ENCODE measurements at regions of chr21 and their contacts with region 1.

Region 1: DNA sequence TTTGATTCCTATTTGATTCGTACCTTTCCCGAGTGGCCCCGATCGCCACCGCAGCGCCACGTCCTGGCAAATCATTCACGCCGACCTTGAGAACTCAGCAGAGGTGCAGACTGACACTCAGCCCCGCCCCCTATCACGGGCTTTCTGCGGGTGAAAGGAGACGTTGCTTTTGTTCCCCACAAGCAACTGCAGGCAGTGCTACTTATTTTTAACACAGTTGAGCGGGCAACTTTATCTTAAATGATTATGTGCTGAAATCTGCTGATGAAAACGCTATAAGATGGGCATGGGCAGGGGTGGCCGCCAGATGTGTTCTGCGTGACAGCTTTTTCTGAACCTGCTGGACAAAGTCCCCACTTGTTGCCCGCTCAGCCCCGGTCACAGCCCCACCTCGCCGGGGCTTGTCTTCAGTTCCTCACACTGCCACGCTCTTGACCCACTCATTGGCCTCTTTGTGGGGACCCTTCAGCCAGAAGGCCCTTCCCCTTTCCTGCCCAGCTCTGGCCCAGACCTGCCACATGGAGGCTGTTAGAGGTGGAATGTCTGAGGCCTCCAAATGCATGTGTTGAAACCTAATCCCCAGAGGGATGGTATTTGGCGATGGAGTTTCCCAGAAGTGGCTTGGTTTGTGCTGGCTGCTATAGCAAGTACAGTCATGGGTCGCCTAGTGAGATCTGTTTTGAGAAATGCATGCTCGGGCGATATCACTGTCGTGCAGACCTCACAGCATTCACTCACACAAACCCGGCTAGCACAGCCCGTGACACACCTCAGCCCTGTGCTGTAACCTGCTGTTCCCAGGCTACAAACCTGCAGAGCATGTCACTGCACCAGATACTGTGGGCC is 15.7 kb upstream of the PDXK start:
- DNase-seq: no peak
- H3K4me3 ChIP-seq: no peak overlapping the region
- CTCF ChIP-seq: no peak
- POLR2A ChIP-seq: no peak

Region 2: GRCh38 chr21:43893536-43894205 is 190.4 kb after region 1 on chr21:
- intact Hi-C with region 1: loop called (anchors 10 kb)
- DNase-seq: no peak
- H3K4me3 ChIP-seq: no peak overlapping the region
- CTCF ChIP-seq: no peak
- POLR2A ChIP-seq: no peak